ENCODE measurements at regions of chr7 and their contacts with region 1.

Region 1: GRCh38 chr7:109844362-109844761 is 1246.6 kb upstream of the LRRN3 start:
- DNase-seq: peak; percentile 5
- ATAC-seq: no peak
- H3K4me3 Mint-ChIP-seq: no peak overlapping the region
- H3K27ac Mint-ChIP-seq: no peak overlapping the region
- H3K4me1 Mint-ChIP-seq: no peaks in the 10 kb centered on the region
- H3K27me3 Mint-ChIP-seq: no peaks in the 10 kb centered on the region
- CTCF ChIP-seq: peak; percentile 48

Region 2: DNA sequence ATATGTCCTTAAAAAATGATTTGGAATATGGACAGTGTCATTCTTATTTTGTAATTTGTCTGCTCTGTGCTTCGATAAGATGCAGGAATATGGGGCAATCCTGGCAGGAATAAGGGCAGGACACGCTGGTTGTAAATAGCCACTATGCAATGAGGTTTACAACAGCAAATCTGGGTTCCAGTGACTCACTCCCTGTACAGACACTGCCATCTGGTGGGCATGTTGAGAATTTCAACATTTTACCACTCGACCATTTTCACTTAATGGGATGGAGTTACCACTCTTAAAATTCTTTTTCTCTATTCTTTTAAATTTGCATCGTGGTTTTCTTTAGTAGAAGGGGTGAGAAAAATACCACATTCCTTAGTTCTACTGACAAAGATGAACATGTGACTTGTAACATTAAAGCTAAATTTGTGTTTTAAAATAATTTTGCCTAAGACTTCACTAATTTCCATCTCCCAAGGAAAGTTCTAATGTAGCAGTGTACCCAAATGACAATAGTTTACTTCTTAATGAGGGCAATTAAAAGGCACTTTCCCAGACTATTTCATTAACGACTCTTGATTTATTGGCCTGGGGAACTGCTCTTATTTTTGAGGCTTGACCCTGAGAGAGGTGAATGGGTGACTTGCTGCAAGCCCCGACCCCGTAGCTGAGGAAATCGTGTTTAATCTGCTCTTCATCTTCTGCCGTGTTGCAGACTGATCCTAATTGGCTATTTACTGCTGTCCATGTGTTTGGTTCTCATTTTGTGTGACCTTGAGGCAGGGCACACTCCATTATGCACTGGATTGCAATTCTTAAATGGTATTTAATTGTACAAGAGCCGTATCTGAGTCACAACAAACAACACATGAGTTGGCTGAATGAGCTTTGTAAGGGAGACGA is 1891.5 kb after region 1 on chr7:
- CTCF ChIA-PET with region 1: interaction called, 3 read pairs
- POLR2A ChIA-PET with region 1: no interaction called
- intact Hi-C with region 1: loop called (anchors 2 kb)
- DNase-seq: peak; percentile 60
- ATAC-seq: peak; percentile 56
- H3K4me3 Mint-ChIP-seq: no peak overlapping the region
- H3K27ac Mint-ChIP-seq: no peak overlapping the region
- H3K4me1 Mint-ChIP-seq: no peaks in the 10 kb centered on the region
- H3K27me3 Mint-ChIP-seq: peaks cover 1% of the 10 kb centered on the region
- CTCF ChIP-seq: peak; percentile 89

Measured in activated CD8-positive, alpha-beta T cell treated with anti-CD3 and anti-CD28 coated beads for 36 hours (primary cell).